ENCODE measurements at regions of chr19 and their contacts with region 1.

Region 1: GRCh38 chr19:57578487-57579205 is at the start of gene ZNF416:
- DNase-seq: peak; percentile 97 to 99 (median 98)
- ATAC-seq: peak; percentile 95 to 99 (median 98)
- H3K4me3 ChIP-seq: peak within 1 kb of the TSS; percentile 68 to 100 (median 95)
- H3K27ac ChIP-seq: peak within 1 kb of the TSS in 11 of 12 donors; percentile 58 to 87 (median 78)
- H3K4me1 ChIP-seq: peaks cover 0 to 30% (median 18%) of the 10 kb centered on the region in 12 donors
- H3K27me3 ChIP-seq: no peaks in the 10 kb centered on the region
- CTCF ChIP-seq: peak in 7 of 12 donors; percentile 7 to 53 (median 28)
- POLR2A ChIP-seq: peak in 1 of 2 donors; percentile 38
- total RNA-seq, gene ZNF416: 3.3 to 7.3 (median 5.1) TPM

Region 2: DNA sequence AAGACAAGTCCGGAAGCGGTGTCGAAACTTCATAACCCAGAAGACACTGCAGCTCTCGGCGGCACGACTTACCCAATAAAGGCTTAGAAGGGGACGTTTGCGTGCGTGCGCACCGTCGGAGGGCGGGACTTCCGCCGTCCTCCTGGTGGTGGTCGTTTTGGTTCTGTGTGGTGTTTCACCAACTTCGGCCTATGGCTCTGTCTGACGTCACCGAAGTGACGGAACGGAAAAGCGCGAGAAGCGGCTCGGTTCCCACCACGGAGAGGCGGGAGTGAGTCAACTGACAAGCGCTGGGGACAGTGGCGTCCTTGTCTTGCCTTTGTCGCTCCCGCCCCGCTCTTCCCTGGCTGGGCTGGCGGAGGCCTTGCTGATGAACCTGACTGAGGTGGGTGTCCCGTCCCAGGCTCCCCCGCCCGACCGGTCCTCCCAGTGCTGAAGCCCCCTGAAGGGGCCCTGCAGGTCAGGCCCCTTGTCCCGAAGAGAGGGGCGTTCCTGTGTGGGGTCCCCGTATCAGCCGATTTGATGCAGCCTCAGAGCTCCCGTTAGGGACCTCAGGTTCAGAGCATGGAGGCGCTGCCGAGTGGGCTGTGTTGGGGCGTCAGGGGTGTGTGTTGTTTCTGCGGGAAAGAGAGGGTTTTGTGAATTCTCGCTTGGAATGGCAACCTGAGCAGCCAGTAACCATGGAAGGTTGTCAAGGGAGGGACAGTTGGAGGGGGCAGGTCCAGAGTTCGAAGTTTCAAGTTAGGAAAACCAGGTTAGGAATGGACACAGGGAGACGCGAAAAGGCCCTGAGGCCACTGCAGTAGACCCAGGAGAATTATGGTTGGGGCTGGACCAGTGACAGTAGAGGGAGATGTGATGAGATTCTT is 188.7 kb before region 1 on chr19 and contains the start of gene ZNF548:
- intact Hi-C with region 1: loop called in 1 of 10 experiments (anchors 5 kb)
- DNase-seq: peak; percentile 96 to 98 (median 97)
- ATAC-seq: peak; percentile 99 to 100 (median 100)
- H3K4me3 ChIP-seq: peak within 1 kb of the TSS; percentile 69 to 97 (median 82)
- H3K27ac ChIP-seq: peak within 1 kb of the TSS; percentile 82 to 98 (median 89)
- H3K4me1 ChIP-seq: peaks cover 0 to 27% (median 17%) of the 10 kb centered on the region in 12 donors
- H3K27me3 ChIP-seq: no peaks in the 10 kb centered on the region
- CTCF ChIP-seq: peak in 8 of 12 donors; percentile 8 to 49 (median 28)
- POLR2A ChIP-seq: peak; percentile 42 to 52
- total RNA-seq, gene ZNF548: 11.6 to 20.3 (median 15.3) TPM

Region 3: GRCh38 chr19:57527136-57527881 is 51.3 kb before region 1 on chr19 and contains the start of gene ZNF549:
- intact Hi-C with region 1: loop called in 1 of 10 experiments (anchors 5 kb)
- DNase-seq: peak; percentile 89 to 93 (median 91)
- ATAC-seq: peak; percentile 100
- H3K4me3 ChIP-seq: peak within 1 kb of the TSS; percentile 69 to 98 (median 84)
- H3K27ac ChIP-seq: peak within 1 kb of the TSS; percentile 59 to 91 (median 84)
- H3K4me1 ChIP-seq: peaks cover 0 to 16% (median 13%) of the 10 kb centered on the region in 12 donors
- H3K27me3 ChIP-seq: no peaks in the 10 kb centered on the region
- CTCF ChIP-seq: no peak
- POLR2A ChIP-seq: peak in 1 of 2 donors; percentile 46
- total RNA-seq, gene ZNF549: 2.5 to 5.2 (median 3.7) TPM

Measured in heart left ventricle (tissue), 16 donors.